ENCODE measurements at regions of chr9 and their contacts with region 1.

Region 1: DNA sequence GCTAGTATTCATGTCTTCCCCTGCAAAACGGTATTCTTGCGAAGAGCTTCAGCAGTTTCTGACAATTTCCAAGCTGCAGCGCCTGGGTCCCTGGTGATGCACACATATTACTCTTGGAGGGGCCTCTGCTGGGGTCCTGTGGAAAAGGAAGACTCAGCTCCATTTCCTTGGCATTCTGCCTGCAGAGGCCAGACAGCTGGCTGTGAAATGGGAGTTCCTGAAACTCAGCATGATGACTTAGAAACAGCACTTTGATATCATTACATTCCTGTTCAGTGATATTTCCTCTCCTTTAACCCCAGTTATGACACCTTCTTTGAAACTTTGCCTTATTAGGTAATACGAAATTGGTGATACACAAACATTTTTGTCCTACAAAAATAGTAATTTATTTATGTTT is 98.5 kb downstream of the APBA1 start:
- DNase-seq: peak; percentile 19
- H3K4me3 ChIP-seq: no peak overlapping the region
- H3K27ac ChIP-seq: no peak overlapping the region
- H3K4me1 ChIP-seq: peaks cover 8% of the 10 kb centered on the region
- H3K27me3 ChIP-seq: no peaks in the 10 kb centered on the region
- CTCF ChIP-seq: no peak

Region 2: DNA sequence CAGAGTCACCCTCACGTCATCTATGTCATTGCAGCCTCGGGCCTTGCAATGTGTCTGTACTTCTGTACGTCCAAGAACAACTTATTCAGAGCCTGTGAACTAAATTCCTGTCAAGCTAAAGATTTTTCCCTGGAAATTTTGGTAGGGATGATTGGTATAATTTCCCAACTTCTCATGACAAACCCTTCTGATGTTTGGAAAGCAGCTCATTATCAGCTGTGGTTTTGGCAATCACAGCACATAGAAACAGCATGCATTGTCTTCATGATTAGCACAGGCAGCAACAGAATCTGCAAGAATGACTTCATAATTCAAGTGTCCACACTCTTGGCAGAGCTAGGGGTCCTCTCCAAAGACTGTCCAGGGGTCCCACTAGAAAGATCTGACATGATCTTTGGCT is 49.0 kb after region 1 on chr9:
- CTCF ChIA-PET with region 1: interaction called, 4 read pairs
- dilution Hi-C with region 1: no loop called
- in situ Hi-C with region 1: no loop called
- intact Hi-C with region 1: loop called (anchors 5 kb)
- DNase-seq: no peak
- H3K4me3 ChIP-seq: no peak overlapping the region
- H3K27ac ChIP-seq: no peak overlapping the region
- H3K4me1 ChIP-seq: no peaks in the 10 kb centered on the region
- H3K27me3 ChIP-seq: no peaks in the 10 kb centered on the region
- CTCF ChIP-seq: no peak

Region 3: GRCh38 chr9:69637817-69638200 is 64.2 kb after region 1 on chr9:
- CTCF ChIA-PET with region 1: no interaction called
- dilution Hi-C with region 1: no loop called
- in situ Hi-C with region 1: no loop called
- intact Hi-C with region 1: loop called (anchors 5 kb)
- DNase-seq: peak; percentile 52
- H3K4me3 ChIP-seq: no peak overlapping the region
- H3K27ac ChIP-seq: no peak overlapping the region
- H3K4me1 ChIP-seq: peaks cover 5% of the 10 kb centered on the region
- H3K27me3 ChIP-seq: no peaks in the 10 kb centered on the region
- CTCF ChIP-seq: no peak